PC-9 (cell line): ENCODE measurements at regions of chr2 and their contacts with region 1.

Region 1: DNA sequence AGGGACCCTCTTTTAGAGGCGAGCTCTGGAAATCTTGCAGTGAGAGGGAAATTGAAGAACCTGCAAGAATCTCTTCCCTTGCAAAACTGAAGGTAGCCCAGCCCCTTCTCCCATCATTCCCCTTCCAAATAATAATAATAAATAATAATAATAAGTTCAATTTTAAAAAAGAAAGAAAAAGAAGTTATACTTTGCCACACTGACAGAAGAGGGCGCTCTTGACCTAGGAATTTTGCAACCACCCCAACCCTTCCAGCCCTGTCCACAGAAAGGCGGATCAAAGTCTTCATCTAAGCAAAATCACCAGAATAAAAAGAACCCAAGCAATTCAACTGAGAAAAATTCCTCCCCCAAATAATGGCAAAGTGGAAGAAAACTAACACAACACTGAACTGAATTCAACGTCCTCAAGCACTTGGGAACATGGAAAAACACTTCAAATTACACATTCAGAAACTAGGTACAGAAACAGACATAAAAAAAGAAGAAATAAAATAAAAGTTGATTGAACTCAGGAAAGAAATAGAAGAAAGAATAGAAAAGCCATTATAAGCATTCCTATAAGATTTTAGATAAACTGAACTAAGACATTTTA is 98.9 kb upstream of the GLS start:
- DNase-seq: peak in 1 of 2 experiments; percentile 34
- H3K4me3 ChIP-seq: no peak overlapping the region
- H3K27ac ChIP-seq: no peak overlapping the region
- H3K4me1 ChIP-seq: peaks cover 16% of the 10 kb centered on the region
- H3K27me3 ChIP-seq: no peaks in the 10 kb centered on the region
- CTCF ChIP-seq: peak; percentile 71

Region 2: DNA sequence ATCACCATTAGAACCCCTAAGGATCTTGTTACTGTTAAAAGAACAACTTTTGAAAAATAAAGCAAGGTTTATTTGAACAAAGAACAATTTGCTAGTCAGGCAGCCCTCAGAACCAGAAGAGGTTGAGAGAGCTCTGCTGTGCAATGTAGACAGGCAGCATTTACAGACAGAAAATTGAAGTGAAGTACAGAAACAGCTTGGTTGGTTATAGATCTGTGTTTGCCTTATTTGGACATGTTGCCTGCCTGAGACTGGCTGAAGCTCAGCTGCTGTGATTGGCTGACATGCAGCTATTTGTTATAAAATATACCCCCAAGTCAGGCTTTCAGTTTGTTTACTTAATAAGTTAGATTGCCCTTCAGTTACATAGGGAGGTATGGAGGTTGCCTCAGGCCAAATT is 731.7 kb before region 1 on chr2:
- CTCF ChIA-PET with region 1: no interaction called
- POLR2A ChIA-PET with region 1: no interaction called
- intact Hi-C with region 1: no loop called
- DNase-seq: no peak
- H3K4me3 ChIP-seq: no peak overlapping the region
- H3K27ac ChIP-seq: no peak overlapping the region
- H3K4me1 ChIP-seq: no peaks in the 10 kb centered on the region
- H3K27me3 ChIP-seq: no peaks in the 10 kb centered on the region
- CTCF ChIP-seq: no peak

Region 3: DNA sequence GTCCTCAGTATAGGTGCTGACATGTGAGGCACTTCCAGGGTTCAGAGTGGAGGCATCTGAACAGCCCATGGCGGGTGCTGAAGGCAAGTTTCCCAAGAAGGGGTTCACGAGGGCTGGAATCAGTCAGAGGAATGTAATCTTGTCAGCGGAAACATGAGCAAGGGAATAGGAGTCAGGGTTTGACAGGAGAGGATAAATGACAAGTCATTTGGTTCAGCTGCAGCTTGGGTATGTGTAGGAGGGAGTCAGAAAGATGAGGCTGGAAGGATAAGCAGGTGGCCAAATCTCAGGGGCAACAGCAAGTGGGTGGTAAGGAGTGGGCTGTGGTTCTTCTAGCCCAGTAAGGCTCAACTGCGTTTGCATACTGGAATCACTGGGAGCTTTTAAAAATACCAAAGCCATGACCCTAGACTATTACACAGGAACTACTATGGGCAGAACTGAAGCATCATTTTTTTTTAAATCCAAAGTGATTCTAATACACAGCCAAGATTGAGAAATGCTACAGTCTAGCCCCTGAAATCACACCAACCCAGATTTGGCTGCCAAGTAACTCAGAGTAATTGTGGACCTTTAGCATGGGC is 174.6 kb before region 1 on chr2:
- CTCF ChIA-PET with region 1: no interaction called
- POLR2A ChIA-PET with region 1: interaction called, 29 read pairs
- intact Hi-C with region 1: no loop called
- DNase-seq: peak in 1 of 2 experiments; percentile 4
- H3K4me3 ChIP-seq: peak overlapping the region; percentile 39; the same call in 1 of the 2 replicates
- H3K27ac ChIP-seq: peak overlapping the region; percentile 62
- H3K4me1 ChIP-seq: peaks cover 19% of the 10 kb centered on the region
- H3K27me3 ChIP-seq: no peaks in the 10 kb centered on the region
- CTCF ChIP-seq: no peak

Region 4: DNA sequence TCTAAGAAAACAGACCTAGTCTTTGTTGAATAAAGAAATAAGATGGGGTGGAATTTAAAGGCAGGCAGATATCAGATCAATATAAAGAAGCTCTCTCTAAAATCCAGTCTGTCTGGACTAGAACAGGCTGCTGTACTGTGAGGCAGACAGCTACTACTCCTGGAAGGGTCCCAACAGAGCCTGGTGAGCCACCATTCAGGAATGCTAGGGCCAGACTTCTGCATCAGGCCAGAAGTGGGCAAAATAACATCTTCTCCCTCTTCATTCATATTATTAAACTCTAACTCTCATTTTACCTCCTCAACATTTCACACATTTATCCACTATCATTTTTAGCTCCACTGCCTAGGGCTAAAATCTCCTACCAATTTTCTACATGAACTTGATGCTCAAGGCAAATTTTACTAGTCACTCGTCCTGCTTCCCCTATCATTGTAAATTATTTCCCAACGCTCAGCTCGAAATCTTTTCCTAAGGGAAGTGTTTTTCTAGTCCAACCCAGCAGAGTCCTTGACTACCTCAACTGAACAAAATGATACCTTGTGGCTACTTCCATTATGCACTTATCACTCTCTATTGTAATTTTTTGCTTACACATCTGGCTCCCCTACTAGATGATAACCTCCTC is 53.7 kb after region 1 on chr2:
- CTCF ChIA-PET with region 1: no interaction called
- POLR2A ChIA-PET with region 1: no interaction called
- intact Hi-C with region 1: loop called (anchors 5 kb)
- DNase-seq: peak in 1 of 2 experiments; percentile 49
- H3K4me3 ChIP-seq: no peak overlapping the region
- H3K27ac ChIP-seq: no peak overlapping the region
- H3K4me1 ChIP-seq: peaks cover 45% of the 10 kb centered on the region
- H3K27me3 ChIP-seq: no peaks in the 10 kb centered on the region
- CTCF ChIP-seq: no peak

Region 5: DNA sequence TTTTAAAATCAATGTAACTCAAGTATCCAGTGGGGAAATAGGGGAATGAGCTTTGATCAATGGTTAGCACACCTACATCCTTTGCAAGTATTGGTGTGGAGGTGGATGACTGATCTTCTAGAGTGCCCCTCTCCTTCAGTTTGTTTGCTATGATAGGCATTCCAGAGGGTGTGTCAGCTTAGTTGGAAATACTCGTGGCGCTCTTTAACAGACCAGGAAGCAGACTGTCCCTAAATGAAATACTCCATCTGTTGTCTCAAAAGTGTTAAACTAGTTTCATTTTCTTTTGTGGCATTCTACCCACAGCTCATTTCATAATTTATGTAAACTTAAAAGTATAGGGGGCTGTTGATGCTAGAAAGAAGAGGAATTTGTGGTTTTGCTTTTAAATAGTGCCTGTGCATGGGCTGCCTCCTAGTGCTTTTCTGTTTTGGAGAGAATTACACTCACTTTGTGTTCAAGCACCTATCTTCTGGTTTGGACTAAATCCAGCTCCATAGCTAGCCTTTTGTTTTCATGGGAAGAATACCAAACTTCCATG is 166.1 kb after region 1 on chr2:
- CTCF ChIA-PET with region 1: no interaction called
- POLR2A ChIA-PET with region 1: no interaction called
- intact Hi-C with region 1: loop called (anchors 1 kb)
- DNase-seq: peak; percentile 35 to 75
- H3K4me3 ChIP-seq: no peak overlapping the region
- H3K27ac ChIP-seq: peak overlapping the region; percentile 46
- H3K4me1 ChIP-seq: peaks cover 33% of the 10 kb centered on the region
- H3K27me3 ChIP-seq: no peaks in the 10 kb centered on the region
- CTCF ChIP-seq: no peak

Region 6: GRCh38 chr2:191051825-191052778 is 270.4 kb after region 1 on chr2:
- CTCF ChIA-PET with region 1: no interaction called
- POLR2A ChIA-PET with region 1: no interaction called
- intact Hi-C with region 1: loop called (anchors 10 kb)
- DNase-seq: no peak
- H3K4me3 ChIP-seq: no peak overlapping the region
- H3K27ac ChIP-seq: no peak overlapping the region
- H3K4me1 ChIP-seq: peaks cover 13% of the 10 kb centered on the region
- H3K27me3 ChIP-seq: no peaks in the 10 kb centered on the region
- CTCF ChIP-seq: peak; percentile 73

Region 7: GRCh38 chr2:191189112-191189635 is 407.5 kb after region 1 on chr2:
- CTCF ChIA-PET with region 1: no interaction called
- POLR2A ChIA-PET with region 1: no interaction called
- intact Hi-C with region 1: no loop called
- DNase-seq: no peak
- H3K4me3 ChIP-seq: no peak overlapping the region
- H3K27ac ChIP-seq: no peak overlapping the region
- H3K4me1 ChIP-seq: no peaks in the 10 kb centered on the region
- H3K27me3 ChIP-seq: no peaks in the 10 kb centered on the region
- CTCF ChIP-seq: no peak

Region 8: GRCh38 chr2:191501561-191502168 is 720.0 kb after region 1 on chr2:
- CTCF ChIA-PET with region 1: no interaction called
- POLR2A ChIA-PET with region 1: no interaction called
- intact Hi-C with region 1: loop called (anchors 5 kb)
- DNase-seq: no peak
- H3K4me3 ChIP-seq: no peak overlapping the region
- H3K27ac ChIP-seq: no peak overlapping the region
- H3K4me1 ChIP-seq: no peaks in the 10 kb centered on the region
- H3K27me3 ChIP-seq: no peaks in the 10 kb centered on the region
- CTCF ChIP-seq: peak; percentile 57